ENCODE measurements at regions of chr22 and their contacts with region 1.

Region 1: GRCh38 chr22:16932577-16932976 is 75.4 kb downstream of the GAB4 start:
- DNase-seq: no peak
- ATAC-seq: no peak
- H3K4me3 ChIP-seq: no peak overlapping the region
- H3K27ac ChIP-seq: no peak overlapping the region
- H3K4me1 ChIP-seq: no peaks in the 10 kb centered on the region
- H3K27me3 ChIP-seq: peaks cover 0 to 54% (median 13%) of the 10 kb centered on the region in 9 donors
- CTCF ChIP-seq: peak in 3 of 12 donors; percentile 9 to 23 (median 12)
- POLR2A ChIP-seq: no peak

Region 2: DNA sequence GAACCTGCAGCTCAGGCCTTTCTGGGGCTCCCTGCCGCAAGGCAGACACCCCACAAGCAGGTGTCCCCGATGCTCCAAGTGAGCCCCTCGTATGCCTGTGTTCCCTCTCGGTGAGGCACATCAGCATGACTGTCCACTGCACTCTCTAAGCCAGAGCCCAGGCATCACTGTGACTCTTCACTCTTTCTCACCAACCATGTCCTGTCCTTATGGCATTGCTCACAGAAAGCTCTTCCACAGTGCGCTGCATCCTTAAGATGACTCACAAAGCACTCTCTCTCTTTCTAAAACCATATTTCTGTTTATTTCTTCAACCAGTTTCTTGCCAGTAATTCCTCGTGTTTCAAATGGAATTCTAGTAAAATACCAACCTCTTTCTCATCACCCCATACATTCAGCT is 57.3 kb after region 1 on chr22:
- intact Hi-C with region 1: loop called in 1 of 10 experiments (anchors 10 kb)
- DNase-seq: no peak
- ATAC-seq: no peak
- H3K4me3 ChIP-seq: no peak overlapping the region
- H3K27ac ChIP-seq: no peak overlapping the region
- H3K4me1 ChIP-seq: no peaks in the 10 kb centered on the region
- H3K27me3 ChIP-seq: peaks cover 0 to 6% (median 0%) of the 10 kb centered on the region in 9 donors
- CTCF ChIP-seq: no peak
- POLR2A ChIP-seq: no peak

Region 3: DNA sequence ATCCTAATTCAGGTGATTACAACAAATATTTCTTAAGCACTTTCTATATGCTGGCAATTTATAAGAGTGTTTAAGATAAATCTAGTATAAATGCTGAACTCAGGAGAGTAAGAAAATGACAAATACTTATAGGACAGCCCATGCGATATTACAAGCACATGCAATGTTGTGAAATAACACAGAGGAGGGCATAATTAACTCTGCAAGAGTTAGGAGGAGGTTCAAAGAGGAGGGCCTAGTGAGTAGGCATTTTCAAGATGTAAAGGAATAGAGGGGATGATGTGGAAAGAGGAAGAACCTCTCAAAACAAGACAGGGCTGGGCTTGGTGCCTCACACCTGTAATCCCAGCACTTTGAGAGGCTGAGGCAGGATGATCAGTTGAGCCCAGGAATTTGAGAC is 115.1 kb after region 1 on chr22:
- intact Hi-C with region 1: loop called in 2 of 10 experiments (anchors 5 to 10 kb)
- DNase-seq: no peak
- ATAC-seq: no peak
- H3K4me3 ChIP-seq: no peak overlapping the region
- H3K27ac ChIP-seq: no peak overlapping the region
- H3K4me1 ChIP-seq: no peaks in the 10 kb centered on the region
- H3K27me3 ChIP-seq: peaks cover 0 to 4% (median 0%) of the 10 kb centered on the region in 9 donors
- CTCF ChIP-seq: no peak
- POLR2A ChIP-seq: no peak